Activated naive CD4-positive, alpha-beta T cell treated with anti-CD3 and anti-CD28 coated beads for 36 hours (primary cell): ENCODE measurements at regions of chr12 and their contacts with region 1.

Region 1: DNA sequence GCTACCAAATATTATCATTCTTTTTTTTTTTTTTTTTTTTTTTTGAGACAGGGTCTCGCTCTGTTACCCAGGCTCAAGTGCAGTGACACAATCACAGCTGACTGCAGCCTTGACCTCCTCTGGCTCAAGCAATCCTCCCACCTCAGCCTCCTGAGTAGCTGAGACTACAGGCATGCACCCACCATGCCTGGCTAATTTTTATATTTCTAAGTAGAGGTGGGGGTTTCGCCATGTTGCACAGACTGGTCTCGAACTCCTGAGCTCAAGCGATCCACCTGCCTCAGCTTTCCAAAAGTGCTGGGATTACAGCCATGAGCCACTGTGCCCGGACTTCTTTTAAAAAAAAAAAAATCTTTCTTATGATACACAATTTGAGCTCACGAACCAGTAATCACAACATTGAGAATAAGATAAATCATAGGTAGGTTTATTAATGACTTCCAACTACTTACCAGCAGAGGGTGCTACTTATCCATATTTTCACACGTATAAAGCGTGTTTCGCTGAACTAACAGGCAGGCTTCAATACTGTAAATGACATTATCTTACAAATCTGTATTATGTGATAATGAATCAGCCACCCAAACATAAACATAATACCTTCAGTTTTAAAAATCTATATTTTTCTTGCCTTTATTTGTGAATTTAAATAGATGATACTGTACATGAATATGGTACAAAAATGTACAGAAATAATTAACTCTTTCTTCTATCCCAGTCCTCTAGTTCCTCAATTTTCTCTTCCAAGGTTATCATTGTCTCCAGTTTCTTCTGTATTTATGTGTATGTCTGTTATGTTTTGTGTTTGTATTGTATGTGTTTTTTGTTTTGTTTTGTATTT is 42.5 kb upstream of the BCAT1 start:
- DNase-seq: no peak
- H3K4me3 Mint-ChIP-seq: no peak overlapping the region
- H3K27ac Mint-ChIP-seq: no peak overlapping the region
- H3K4me1 Mint-ChIP-seq: peaks cover 9% of the 10 kb centered on the region
- H3K27me3 Mint-ChIP-seq: peaks cover 2% of the 10 kb centered on the region

Region 2: GRCh38 chr12:24770821-24771220 is 220.6 kb before region 1 on chr12:
- CTCF ChIA-PET with region 1: no interaction called
- intact Hi-C with region 1: no loop called
- DNase-seq: no peak
- H3K4me3 Mint-ChIP-seq: no peak overlapping the region
- H3K27ac Mint-ChIP-seq: no peak overlapping the region
- H3K4me1 Mint-ChIP-seq: no peaks in the 10 kb centered on the region
- H3K27me3 Mint-ChIP-seq: peaks cover 2% of the 10 kb centered on the region

Region 3: DNA sequence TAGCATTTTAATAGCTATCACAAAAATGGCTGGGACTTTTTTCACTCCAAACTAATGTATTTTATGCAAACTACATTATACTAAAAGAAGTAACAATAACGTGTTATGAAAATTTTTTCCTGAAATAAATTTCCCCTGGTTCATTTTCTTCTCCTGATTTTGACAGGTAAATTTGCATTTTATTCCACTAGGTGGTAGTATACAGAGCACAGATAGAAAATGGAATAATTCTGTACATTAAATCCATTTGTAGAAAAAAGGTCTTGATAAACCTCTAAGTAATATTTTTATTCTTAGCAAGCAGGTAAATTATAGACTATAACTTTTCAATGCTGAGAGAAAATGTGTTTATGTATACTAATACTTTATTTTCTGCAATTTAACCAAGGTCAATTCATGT is 139.0 kb before region 1 on chr12:
- CTCF ChIA-PET with region 1: interaction called, 4 read pairs
- intact Hi-C with region 1: loop called (anchors 2 kb)
- DNase-seq: no peak
- H3K4me3 Mint-ChIP-seq: no peak overlapping the region
- H3K27ac Mint-ChIP-seq: no peak overlapping the region
- H3K4me1 Mint-ChIP-seq: peaks cover 17% of the 10 kb centered on the region
- H3K27me3 Mint-ChIP-seq: peaks cover 20% of the 10 kb centered on the region

Region 4: GRCh38 chr12:25119020-25119419 is 127.6 kb after region 1 on chr12:
- CTCF ChIA-PET with region 1: interaction called, 5 read pairs
- intact Hi-C with region 1: loop called (anchors 1 kb)
- DNase-seq: no peak
- H3K4me3 Mint-ChIP-seq: no peak overlapping the region
- H3K27ac Mint-ChIP-seq: no peak overlapping the region
- H3K4me1 Mint-ChIP-seq: peaks cover 6% of the 10 kb centered on the region
- H3K27me3 Mint-ChIP-seq: peaks cover 3% of the 10 kb centered on the region

Region 5: GRCh38 chr12:25151476-25151875 is 160.0 kb after region 1 on chr12:
- CTCF ChIA-PET with region 1: interaction called, 15 read pairs
- intact Hi-C with region 1: loop called (anchors 1 kb)
- DNase-seq: no peak
- H3K4me3 Mint-ChIP-seq: no peak overlapping the region
- H3K27ac Mint-ChIP-seq: no peak overlapping the region
- H3K4me1 Mint-ChIP-seq: peaks cover 6% of the 10 kb centered on the region
- H3K27me3 Mint-ChIP-seq: no peaks in the 10 kb centered on the region

Region 6: GRCh38 chr12:26028953-26029735 is 1037.7 kb after region 1 on chr12:
- CTCF ChIA-PET with region 1: no interaction called
- intact Hi-C with region 1: loop called (anchors 5 kb)
- DNase-seq: peak; percentile 50
- H3K4me3 Mint-ChIP-seq: no peak overlapping the region
- H3K27ac Mint-ChIP-seq: no peak overlapping the region
- H3K4me1 Mint-ChIP-seq: no peaks in the 10 kb centered on the region
- H3K27me3 Mint-ChIP-seq: no peaks in the 10 kb centered on the region